ENCODE measurements at regions of chr3 and their contacts with region 1.

Region 1: DNA sequence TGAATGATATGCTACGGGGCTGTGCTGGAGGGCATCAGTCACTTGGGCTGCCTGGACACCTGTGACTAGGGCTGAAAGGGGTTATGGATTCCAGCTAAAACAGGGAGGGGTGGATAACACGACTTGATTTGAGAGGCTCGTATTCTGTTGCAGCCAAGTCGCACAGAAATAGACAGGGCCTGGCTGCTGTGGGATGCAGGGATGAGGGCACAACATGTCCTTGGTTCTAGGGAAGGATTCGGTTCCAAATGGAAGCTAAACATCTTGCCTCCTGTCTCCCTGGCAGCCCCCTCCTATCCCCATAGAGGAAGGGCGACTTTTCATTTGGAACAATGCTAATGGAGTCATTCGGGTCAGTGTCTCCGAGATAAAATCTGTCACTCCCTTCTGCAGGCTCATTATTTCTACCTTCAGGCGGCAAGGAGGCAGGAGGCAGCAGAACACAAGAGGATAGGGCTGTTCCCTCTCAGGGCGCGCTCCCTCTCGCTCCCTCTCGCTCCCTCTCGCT is 433.8 kb upstream of the RBMS3 start:
- DNase-seq: no peak
- ATAC-seq: no peak
- H3K4me3 ChIP-seq: no peak overlapping the region
- H3K27ac ChIP-seq: no peak overlapping the region
- H3K4me1 ChIP-seq: no peaks in the 10 kb centered on the region
- H3K27me3 ChIP-seq: no peaks in the 10 kb centered on the region
- CTCF ChIP-seq: no peak

Region 2: DNA sequence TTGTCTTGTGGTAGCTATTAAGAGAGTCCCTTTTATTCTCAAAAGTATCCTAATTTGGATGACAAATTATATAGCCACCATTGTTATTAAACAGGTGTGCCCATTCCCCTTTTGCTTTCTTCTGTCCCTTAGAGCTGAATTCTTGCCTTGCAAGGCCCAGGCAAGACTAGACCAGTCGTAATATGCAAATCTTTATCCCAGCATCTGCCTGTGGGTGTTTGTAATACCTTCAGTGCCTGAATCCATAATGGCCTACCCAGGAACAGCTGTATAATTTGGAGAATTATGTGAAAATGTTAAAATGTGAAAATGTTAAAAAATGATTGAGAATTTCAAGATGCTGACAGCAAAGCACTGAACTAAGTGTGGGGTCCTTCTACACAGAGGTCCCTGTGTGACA is 30.9 kb after region 1 on chr3:
- intact Hi-C with region 1: loop called in 1 of 3 experiments (anchors 2 kb)
- DNase-seq: no peak
- ATAC-seq: no peak
- H3K4me3 ChIP-seq: no peak overlapping the region
- H3K27ac ChIP-seq: no peak overlapping the region
- H3K4me1 ChIP-seq: no peaks in the 10 kb centered on the region
- H3K27me3 ChIP-seq: no peaks in the 10 kb centered on the region
- CTCF ChIP-seq: no peak